ENCODE measurements at regions of chr2 and their contacts with region 1.

Region 1: GRCh38 chr2:200888704-200889625 is at the starts of genes NIF3L1 and PPIL3:
- DNase-seq: peak; percentile 98
- H3K4me3 ChIP-seq: peak within 1 kb of the TSS; percentile 62 to 76 (median 73)
- H3K27ac ChIP-seq: peak within 1 kb of the TSS; percentile 93 to 96 (median 94)
- H3K4me1 ChIP-seq: peaks cover 0 to 33% (median 20%) of the 10 kb centered on the region in 4 donors
- H3K27me3 ChIP-seq: no peaks in the 10 kb centered on the region
- CTCF ChIP-seq: no peak
- EP300 ChIP-seq: peak in 2 of 4 donors; percentile 19 to 35
- POLR2A ChIP-seq: peak in 1 of 2 donors; percentile 49
- total RNA-seq, gene NIF3L1: 9.8 to 23.5 (median 15.9) TPM
- total RNA-seq, gene PPIL3: 11.8 to 116 (median 22.2) TPM

Region 2: DNA sequence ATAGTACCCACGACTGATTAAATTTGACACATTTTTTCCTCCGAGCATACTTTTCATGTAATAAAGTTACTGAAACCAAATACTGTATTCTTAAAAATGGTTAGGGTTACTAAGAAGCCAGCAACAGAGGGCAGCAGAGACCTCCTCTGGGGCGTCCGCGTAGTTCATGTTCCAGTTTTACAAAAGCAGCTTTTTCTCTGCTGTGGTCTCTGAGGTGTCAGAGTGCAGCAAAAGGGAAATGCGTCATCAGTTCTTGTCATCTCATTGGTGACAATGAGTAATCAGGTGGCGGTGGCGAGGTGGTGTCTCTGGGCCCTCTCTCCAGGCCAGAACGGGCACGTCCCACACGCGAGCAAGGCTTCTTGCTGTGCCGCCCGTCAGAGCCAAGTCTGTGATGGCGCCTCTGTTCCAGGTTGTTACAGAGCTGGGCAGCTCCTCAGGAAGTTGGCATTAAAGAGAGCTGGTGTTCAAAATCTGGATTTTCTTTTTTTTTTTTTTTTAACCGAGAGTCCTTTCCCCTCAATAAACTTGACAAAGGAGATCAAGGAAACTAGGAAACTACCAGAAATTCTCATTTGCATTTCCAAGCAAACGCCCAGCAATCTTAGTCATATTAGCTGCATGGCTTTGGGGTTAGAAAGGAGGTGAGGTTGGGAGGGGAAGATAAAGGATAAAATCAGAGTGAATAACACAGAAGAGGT is 175.8 kb before region 1 on chr2:
- intact Hi-C with region 1: loop called (anchors 5 kb)
- DNase-seq: peak; percentile 89
- H3K4me3 ChIP-seq: peak overlapping the region; percentile 28 to 50 (median 47)
- H3K27ac ChIP-seq: peak overlapping the region; percentile 50 to 74 (median 67)
- H3K4me1 ChIP-seq: peaks cover 0 to 5% (median 2%) of the 10 kb centered on the region in 4 donors
- H3K27me3 ChIP-seq: no peaks in the 10 kb centered on the region
- CTCF ChIP-seq: peak in 3 of 4 experiments; percentile 59 to 77 (median 63)
- EP300 ChIP-seq: no peak
- POLR2A ChIP-seq: peak in 1 of 2 donors; percentile 30

Region 3: DNA sequence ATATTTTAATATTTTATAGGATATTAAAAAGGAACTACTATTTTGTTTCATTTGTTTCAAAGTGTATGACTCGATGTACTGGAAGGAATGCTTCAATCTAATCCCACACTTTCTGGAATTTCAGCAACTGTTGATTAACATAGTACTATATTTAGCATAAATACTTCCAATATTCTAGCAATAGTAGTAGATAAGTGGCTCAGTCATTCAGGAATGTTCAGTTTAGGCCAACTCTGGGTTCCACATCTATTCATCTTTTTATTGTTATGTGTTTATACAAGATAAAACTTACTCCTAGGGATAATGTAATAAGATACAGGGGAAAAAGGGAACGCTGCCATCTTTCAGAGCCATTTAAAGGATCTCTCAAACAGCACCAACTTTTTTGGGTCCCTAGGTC is 96.8 kb after region 1 on chr2:
- intact Hi-C with region 1: no loop called
- DNase-seq: no peak
- H3K4me3 ChIP-seq: no peak overlapping the region
- H3K27ac ChIP-seq: no peak overlapping the region
- H3K4me1 ChIP-seq: no peaks in the 10 kb centered on the region
- H3K27me3 ChIP-seq: no peaks in the 10 kb centered on the region
- CTCF ChIP-seq: no peak
- EP300 ChIP-seq: no peak
- POLR2A ChIP-seq: no peak

Region 4: GRCh38 chr2:201040867-201041628 is 152.1 kb after region 1 on chr2:
- intact Hi-C with region 1: no loop called
- DNase-seq: no peak
- H3K4me3 ChIP-seq: no peak overlapping the region
- H3K27ac ChIP-seq: no peak overlapping the region
- H3K4me1 ChIP-seq: peaks cover 0 to 6% (median 0%) of the 10 kb centered on the region in 4 donors
- H3K27me3 ChIP-seq: no peaks in the 10 kb centered on the region
- CTCF ChIP-seq: no peak
- EP300 ChIP-seq: no peak
- POLR2A ChIP-seq: no peak